CD4-positive, alpha-beta memory T cell (primary cell): ENCODE measurements at regions of chr2 and their contacts with region 1.

Region 1: GRCh38 chr2:237427769-237428506 is 14.0 kb upstream of the COL6A3 start:
- DNase-seq: peak in 1 of 5 donors; percentile 76
- H3K4me3 ChIP-seq: no peak overlapping the region
- H3K4me3 Mint-ChIP-seq: peak overlapping the region in 6 of 8 donors; percentile 3 to 78 (median 38)
- H3K27ac ChIP-seq: no peak overlapping the region
- H3K27ac Mint-ChIP-seq: peak overlapping the region; percentile 61 to 80 (median 66)
- H3K4me1 ChIP-seq: peaks cover 57% of the 10 kb centered on the region
- H3K4me1 Mint-ChIP-seq: peaks cover 52 to 67% (median 59%) of the 10 kb centered on the region in 4 donors
- H3K27me3 ChIP-seq: no peaks in the 10 kb centered on the region
- H3K27me3 Mint-ChIP-seq: no peaks in the 10 kb centered on the region

Region 2: GRCh38 chr2:237223201-237223861 is 204.6 kb before region 1 on chr2:
- CTCF ChIA-PET with region 1: no interaction called
- POLR2A ChIA-PET with region 1: no interaction called
- intact Hi-C with region 1: no loop called
- DNase-seq: no peak
- H3K4me3 ChIP-seq: no peak overlapping the region
- H3K4me3 Mint-ChIP-seq: no peak overlapping the region
- H3K27ac ChIP-seq: no peak overlapping the region
- H3K27ac Mint-ChIP-seq: no peak overlapping the region
- H3K4me1 ChIP-seq: no peaks in the 10 kb centered on the region
- H3K4me1 Mint-ChIP-seq: no peaks in the 10 kb centered on the region
- H3K27me3 ChIP-seq: no peaks in the 10 kb centered on the region
- H3K27me3 Mint-ChIP-seq: peaks cover 11% of the 10 kb centered on the region in 2 donors

Region 3: GRCh38 chr2:237411683-237412423 is 16.1 kb before region 1 on chr2:
- CTCF ChIA-PET with region 1: no interaction called
- POLR2A ChIA-PET with region 1: no interaction called
- intact Hi-C with region 1: no loop called
- DNase-seq: no peak
- H3K4me3 ChIP-seq: no peak overlapping the region
- H3K4me3 Mint-ChIP-seq: no peak overlapping the region
- H3K27ac ChIP-seq: no peak overlapping the region
- H3K27ac Mint-ChIP-seq: no peak overlapping the region
- H3K4me1 ChIP-seq: no peaks in the 10 kb centered on the region
- H3K4me1 Mint-ChIP-seq: no peaks in the 10 kb centered on the region
- H3K27me3 ChIP-seq: no peaks in the 10 kb centered on the region
- H3K27me3 Mint-ChIP-seq: peaks cover 0 to 8% of the 10 kb centered on the region in 2 donors

Region 4: DNA sequence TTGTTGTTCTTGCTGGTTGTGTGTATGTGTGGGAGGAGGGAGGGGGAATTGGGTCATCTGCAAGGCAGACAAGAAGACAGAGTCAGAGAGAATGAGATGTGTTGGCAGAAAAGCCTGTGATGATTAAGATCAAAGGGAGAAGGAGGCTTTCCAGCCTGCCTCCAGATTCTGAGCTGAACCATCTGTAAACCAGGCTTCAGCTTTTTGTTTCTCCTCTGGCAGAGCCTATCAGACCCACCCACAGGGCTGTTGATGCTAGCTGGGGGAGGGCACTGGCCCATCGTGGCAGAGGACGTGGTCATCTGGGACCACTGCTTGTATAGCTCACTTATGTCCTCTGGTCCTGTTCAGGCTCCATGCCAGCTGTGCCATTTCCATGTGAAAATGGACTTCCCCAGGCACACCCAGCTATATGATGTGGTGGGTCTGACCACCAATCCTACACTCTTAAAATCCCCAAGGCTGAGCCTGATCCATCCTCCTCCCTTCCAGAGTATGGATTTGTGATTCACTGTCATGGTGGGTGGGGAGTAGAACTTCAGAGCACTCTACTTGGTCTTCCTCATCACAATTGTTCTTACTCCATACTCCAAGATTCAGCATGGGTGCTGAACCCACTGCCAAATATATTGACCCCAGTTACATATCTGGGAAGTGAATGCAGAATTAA is 13.8 kb after region 1 on chr2:
- CTCF ChIA-PET with region 1: interaction called, 54 read pairs
- POLR2A ChIA-PET with region 1: interaction called, 31 read pairs
- intact Hi-C with region 1: no loop called
- DNase-seq: peak; percentile 38 to 59 (median 56)
- H3K4me3 ChIP-seq: no peak overlapping the region
- H3K4me3 Mint-ChIP-seq: peak overlapping the region in 7 of 8 donors; percentile 3 to 63 (median 28)
- H3K27ac ChIP-seq: no peak overlapping the region
- H3K27ac Mint-ChIP-seq: peak overlapping the region; percentile 31 to 87 (median 43)
- H3K4me1 ChIP-seq: peaks cover 45% of the 10 kb centered on the region
- H3K4me1 Mint-ChIP-seq: peaks cover 30 to 51% (median 42%) of the 10 kb centered on the region in 4 donors
- H3K27me3 ChIP-seq: no peaks in the 10 kb centered on the region
- H3K27me3 Mint-ChIP-seq: no peaks in the 10 kb centered on the region